Activated naive CD4-positive, alpha-beta T cell treated with anti-CD3 and anti-CD28 coated beads for 36 hours (primary cell): ENCODE measurements at regions of chr18 and their contacts with region 1.

Region 1: DNA sequence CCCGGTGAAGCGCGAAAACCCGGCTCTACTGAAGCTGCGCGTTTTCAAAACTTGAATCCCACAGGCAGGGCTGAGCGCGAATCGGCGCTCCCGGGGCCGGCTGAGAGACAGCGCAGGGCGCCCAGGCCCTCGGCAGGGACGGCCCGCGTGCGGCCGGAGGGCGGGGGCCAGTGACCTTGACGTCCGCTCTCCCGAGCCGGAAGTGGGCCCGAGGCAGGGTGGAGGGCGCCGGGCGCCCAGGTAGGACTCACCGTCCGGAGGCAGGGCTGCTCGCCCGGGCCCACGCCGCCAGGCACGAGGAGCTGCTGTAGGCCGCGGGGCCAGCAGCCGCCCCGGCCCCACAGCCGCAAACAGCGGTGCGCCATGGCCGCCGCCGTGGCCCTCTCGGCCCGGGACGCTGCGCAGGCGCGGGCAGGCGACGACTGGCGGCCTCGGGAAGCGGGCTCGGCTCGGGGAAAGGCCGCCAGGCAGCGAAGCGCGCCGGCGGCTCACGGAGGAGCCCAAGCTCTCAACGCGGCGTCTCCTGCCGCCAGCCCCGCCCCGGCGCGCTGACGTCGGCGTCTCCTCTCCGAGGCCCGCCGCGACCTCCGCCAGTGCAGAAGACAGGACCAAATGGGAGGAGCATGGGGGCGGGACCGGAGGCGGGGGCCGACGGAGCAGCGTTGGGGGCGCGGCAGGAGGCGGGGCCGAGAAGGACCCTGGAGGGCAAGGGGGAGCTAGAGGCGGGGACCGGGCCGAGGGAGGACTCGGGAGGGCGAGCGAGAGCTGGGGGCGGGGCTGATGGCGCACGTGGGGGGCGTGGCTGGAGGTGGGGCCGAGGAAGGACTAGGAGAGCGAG is at the start of gene AFG3L2:
- DNase-seq: peak; percentile 100
- H3K4me3 Mint-ChIP-seq: peak within 1 kb of the TSS; percentile 90
- H3K27ac Mint-ChIP-seq: peak within 1 kb of the TSS; percentile 82
- H3K4me1 Mint-ChIP-seq: peaks cover 47% of the 10 kb centered on the region
- H3K27me3 Mint-ChIP-seq: no peaks in the 10 kb centered on the region
- total RNA-seq, gene AFG3L2: 41.8 to 42.9 TPM

Region 2: DNA sequence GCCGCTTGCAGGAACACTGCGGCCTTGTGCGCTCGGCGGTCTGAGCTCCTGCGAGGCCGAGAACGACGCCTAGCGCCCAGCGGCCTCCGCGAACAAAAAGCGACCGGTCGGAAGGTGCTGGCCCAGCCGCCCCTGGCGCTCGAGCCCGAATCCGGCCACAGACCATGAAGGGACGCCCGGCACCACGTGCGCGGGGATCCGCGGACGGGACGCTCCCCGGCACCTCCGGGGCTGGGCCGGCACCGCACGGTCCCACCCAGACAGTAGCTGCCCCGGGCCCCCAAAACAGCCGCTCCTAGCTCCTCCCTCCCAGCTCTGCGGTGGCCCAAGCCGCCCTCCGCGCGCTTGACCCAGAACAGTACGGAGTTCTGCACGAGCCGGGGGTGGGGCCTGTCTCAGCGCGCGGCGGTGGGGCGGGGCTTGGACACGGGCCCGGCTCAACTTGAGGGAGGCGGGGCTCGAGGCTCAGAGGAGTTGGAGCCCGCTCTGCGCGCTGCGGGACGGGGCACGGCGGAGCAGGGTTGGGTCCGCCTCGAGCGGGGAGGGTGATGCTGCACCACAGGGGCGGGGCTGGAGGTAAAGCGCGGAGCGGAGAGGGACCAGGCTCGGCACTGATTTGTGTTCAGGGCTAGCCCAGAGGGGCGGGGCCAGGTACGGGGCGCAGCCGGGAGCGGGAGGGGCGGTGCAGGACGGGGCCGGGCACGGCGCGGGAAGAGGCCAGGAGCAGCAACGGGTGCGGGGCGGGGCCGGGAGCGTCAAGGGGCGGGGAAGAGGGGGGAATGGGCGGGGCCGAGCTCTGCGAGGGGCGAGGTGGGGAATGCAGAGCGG is 396.2 kb before region 1 on chr18:
- CTCF ChIA-PET with region 1: no interaction called
- intact Hi-C with region 1: loop called (anchors 1 kb)
- DNase-seq: peak; percentile 99
- H3K4me3 Mint-ChIP-seq: peak overlapping the region; percentile 86
- H3K27ac Mint-ChIP-seq: peak overlapping the region; percentile 83
- H3K4me1 Mint-ChIP-seq: peaks cover 14% of the 10 kb centered on the region
- H3K27me3 Mint-ChIP-seq: peaks cover 2% of the 10 kb centered on the region

Region 3: GRCh38 chr18:12408247-12408869 is 31.4 kb after region 1 on chr18:
- CTCF ChIA-PET with region 1: no interaction called
- intact Hi-C with region 1: loop called (anchors 1 kb)
- DNase-seq: no peak
- H3K4me3 Mint-ChIP-seq: peak overlapping the region; percentile 72
- H3K27ac Mint-ChIP-seq: no peak overlapping the region
- H3K4me1 Mint-ChIP-seq: peaks cover 13% of the 10 kb centered on the region
- H3K27me3 Mint-ChIP-seq: peaks cover 38% of the 10 kb centered on the region

Region 4: GRCh38 chr18:12702221-12703095 is 325.5 kb after region 1 on chr18 and contains the starts of genes CEP76 and PSMG2:
- CTCF ChIA-PET with region 1: no interaction called
- intact Hi-C with region 1: loop called (anchors 1 kb)
- DNase-seq: peak; percentile 80
- H3K4me3 Mint-ChIP-seq: peak within 1 kb of the TSS; percentile 97
- H3K27ac Mint-ChIP-seq: peak within 1 kb of the TSS; percentile 97
- H3K4me1 Mint-ChIP-seq: peaks cover 41% of the 10 kb centered on the region
- H3K27me3 Mint-ChIP-seq: no peaks in the 10 kb centered on the region
- total RNA-seq, gene CEP76: 14.8 to 18.0 TPM
- total RNA-seq, gene PSMG2: 99.2 to 107 TPM

Region 5: GRCh38 chr18:12947355-12948041 is 570.6 kb after region 1 on chr18 and contains the start of gene SEH1L:
- CTCF ChIA-PET with region 1: no interaction called
- intact Hi-C with region 1: loop called (anchors 1 kb)
- DNase-seq: peak; percentile 100
- H3K4me3 Mint-ChIP-seq: peak within 1 kb of the TSS; percentile 99
- H3K27ac Mint-ChIP-seq: peak within 1 kb of the TSS; percentile 97
- H3K4me1 Mint-ChIP-seq: peaks cover 40% of the 10 kb centered on the region
- H3K27me3 Mint-ChIP-seq: no peaks in the 10 kb centered on the region
- total RNA-seq, gene SEH1L: 82.6 to 85.4 TPM

Region 6: GRCh38 chr18:13566941-13567746 is 1190.2 kb after region 1 on chr18:
- CTCF ChIA-PET with region 1: no interaction called
- intact Hi-C with region 1: loop called (anchors 2 kb)
- DNase-seq: no peak
- H3K4me3 Mint-ChIP-seq: peak overlapping the region; percentile 7
- H3K27ac Mint-ChIP-seq: peak overlapping the region; percentile 68
- H3K4me1 Mint-ChIP-seq: peaks cover 68% of the 10 kb centered on the region
- H3K27me3 Mint-ChIP-seq: no peaks in the 10 kb centered on the region